ENCODE measurements at regions of chr1 and their contacts with region 1.

Region 1: GRCh38 chr1:226806995-226807394 is 63.4 kb upstream of the PSEN2 start:
- DNase-seq: no peak
- ATAC-seq: no peak
- H3K4me3 ChIP-seq: no peak overlapping the region
- H3K27ac ChIP-seq: no peak overlapping the region
- H3K4me1 ChIP-seq: peaks cover 17 to 23% of the 10 kb centered on the region in 2 experiments
- H3K27me3 ChIP-seq: peaks cover 14 to 33% of the 10 kb centered on the region in 2 experiments; a peak in 4 of 5 replicates
- CTCF ChIP-seq: no peak
- EP300 ChIP-seq: no peak
- POLR2A ChIP-seq: no peak
- RAD21 ChIP-seq: no peak

Region 2: GRCh38 chr1:226643611-226644540 is 163.1 kb before region 1 on chr1:
- CTCF ChIA-PET with region 1: no interaction called
- POLR2A ChIA-PET with region 1: no interaction called
- in situ Hi-C with region 1: no loop called
- intact Hi-C with region 1: no loop called
- DNase-seq: no peak
- ATAC-seq: no peak
- H3K4me3 ChIP-seq: no peak overlapping the region
- H3K27ac ChIP-seq: no peak overlapping the region
- H3K4me1 ChIP-seq: peaks cover 8 to 30% of the 10 kb centered on the region in 2 experiments; a peak in 4 of 5 replicates
- H3K27me3 ChIP-seq: peaks cover 78 to 98% of the 10 kb centered on the region in 2 experiments
- CTCF ChIP-seq: no peak
- EP300 ChIP-seq: no peak
- POLR2A ChIP-seq: no peak
- RAD21 ChIP-seq: no peak

Region 3: GRCh38 chr1:226793620-226794276 is 13.2 kb before region 1 on chr1:
- CTCF ChIA-PET with region 1: no interaction called
- POLR2A ChIA-PET with region 1: interaction called, 25 read pairs
- in situ Hi-C with region 1: no loop called
- intact Hi-C with region 1: no loop called
- DNase-seq: no peak
- ATAC-seq: no peak
- H3K4me3 ChIP-seq: no peak overlapping the region
- H3K27ac ChIP-seq: no peak overlapping the region
- H3K4me1 ChIP-seq: peaks cover 6% of the 10 kb centered on the region in 2 experiments
- H3K27me3 ChIP-seq: peaks cover 8 to 9% of the 10 kb centered on the region in 2 experiments
- CTCF ChIP-seq: no peak
- EP300 ChIP-seq: no peak
- POLR2A ChIP-seq: no peak
- RAD21 ChIP-seq: no peak

Region 4: DNA sequence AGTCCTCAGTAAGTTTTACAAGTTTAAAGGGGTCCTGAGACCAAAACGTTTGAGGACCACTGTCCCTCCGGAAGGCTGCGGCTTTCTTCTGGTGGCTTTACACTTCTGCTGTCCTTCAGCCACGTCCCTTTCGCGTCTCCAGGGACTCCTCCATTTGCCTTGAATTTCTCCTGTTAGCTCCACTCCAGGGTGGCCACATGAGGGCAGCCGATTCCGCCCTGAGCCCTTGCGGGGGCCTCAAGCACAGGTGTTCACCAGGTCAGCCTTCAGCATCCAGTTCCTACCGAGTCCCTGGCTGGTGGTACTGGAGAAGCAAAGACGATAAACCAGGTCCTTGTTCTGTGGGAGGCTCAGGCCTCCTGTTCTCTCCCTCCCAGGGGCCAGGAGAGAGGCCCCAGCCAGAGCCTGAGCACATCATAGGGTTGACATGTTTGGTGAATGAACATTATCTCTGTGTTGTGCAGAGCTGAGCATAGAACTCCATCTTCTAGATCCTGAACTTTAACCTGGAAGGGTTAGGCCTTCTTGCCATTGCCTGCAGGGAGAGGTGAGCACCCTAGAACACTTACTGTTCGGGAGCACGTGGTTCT is 105.7 kb after region 1 on chr1:
- CTCF ChIA-PET with region 1: no interaction called
- POLR2A ChIA-PET with region 1: no interaction called
- in situ Hi-C with region 1: no loop called
- intact Hi-C with region 1: no loop called
- DNase-seq: peak; percentile 64 to 81 (median 73)
- ATAC-seq: peak; percentile 98
- H3K4me3 ChIP-seq: no peak overlapping the region
- H3K27ac ChIP-seq: no peak overlapping the region
- H3K4me1 ChIP-seq: peaks cover 0 to 6% of the 10 kb centered on the region in 2 experiments; a peak in 2 of 5 replicates
- H3K27me3 ChIP-seq: no peaks in the 10 kb centered on the region
- CTCF ChIP-seq: peak; percentile 81 to 93 (median 82)
- EP300 ChIP-seq: no peak
- POLR2A ChIP-seq: no peak
- RAD21 ChIP-seq: peak; percentile 71 to 90